Activated T-helper 2 cell treated with anti-CD3 and anti-CD28 coated beads, Interferon-gamma antibody, Interleukin-2, Interleukin-4, amounts not matched to agents 10 μg/mL and 5 μg/mL and 100 μg/mL, durations not matched to agents 14 hours and 24 hours and 36 hours (primary cell): ENCODE measurements at regions of chr9 and their contacts with region 1.

Region 1: GRCh38 chr9:27573634-27574590 is 631 bp upstream of the C9orf72 start:
- DNase-seq: peak; percentile 95
- H3K4me3 Mint-ChIP-seq: peak overlapping the region; percentile 97
- H3K27ac Mint-ChIP-seq: peak overlapping the region; percentile 100
- H3K4me1 Mint-ChIP-seq: peaks cover 32% of the 10 kb centered on the region
- H3K27me3 Mint-ChIP-seq: peaks cover 6% of the 10 kb centered on the region

Region 2: GRCh38 chr9:26946753-26947727 is 626.9 kb before region 1 on chr9 and contains the start of gene PLAA:
- intact Hi-C with region 1: loop called (anchors 1 kb)
- DNase-seq: peak; percentile 83
- H3K4me3 Mint-ChIP-seq: peak within 1 kb of the TSS; percentile 95
- H3K27ac Mint-ChIP-seq: peak within 1 kb of the TSS; percentile 100
- H3K4me1 Mint-ChIP-seq: peaks cover 47% of the 10 kb centered on the region
- H3K27me3 Mint-ChIP-seq: no peaks in the 10 kb centered on the region
- total RNA-seq, gene PLAA: 36.4 and 42.0 TPM in 2 replicates

Region 3: GRCh38 chr9:27379311-27380251 is 194.3 kb before region 1 on chr9:
- intact Hi-C with region 1: loop called (anchors 1 kb)
- DNase-seq: peak; percentile 37
- H3K4me3 Mint-ChIP-seq: no peak overlapping the region
- H3K27ac Mint-ChIP-seq: no peak overlapping the region
- H3K4me1 Mint-ChIP-seq: peaks cover 18% of the 10 kb centered on the region
- H3K27me3 Mint-ChIP-seq: peaks cover 10% of the 10 kb centered on the region

Region 4: GRCh38 chr9:27473111-27473529 is 100.8 kb before region 1 on chr9:
- intact Hi-C with region 1: no loop called
- DNase-seq: no peak
- H3K4me3 Mint-ChIP-seq: no peak overlapping the region
- H3K27ac Mint-ChIP-seq: no peak overlapping the region
- H3K4me1 Mint-ChIP-seq: peaks cover 12% of the 10 kb centered on the region
- H3K27me3 Mint-ChIP-seq: no peaks in the 10 kb centered on the region

Region 5: DNA sequence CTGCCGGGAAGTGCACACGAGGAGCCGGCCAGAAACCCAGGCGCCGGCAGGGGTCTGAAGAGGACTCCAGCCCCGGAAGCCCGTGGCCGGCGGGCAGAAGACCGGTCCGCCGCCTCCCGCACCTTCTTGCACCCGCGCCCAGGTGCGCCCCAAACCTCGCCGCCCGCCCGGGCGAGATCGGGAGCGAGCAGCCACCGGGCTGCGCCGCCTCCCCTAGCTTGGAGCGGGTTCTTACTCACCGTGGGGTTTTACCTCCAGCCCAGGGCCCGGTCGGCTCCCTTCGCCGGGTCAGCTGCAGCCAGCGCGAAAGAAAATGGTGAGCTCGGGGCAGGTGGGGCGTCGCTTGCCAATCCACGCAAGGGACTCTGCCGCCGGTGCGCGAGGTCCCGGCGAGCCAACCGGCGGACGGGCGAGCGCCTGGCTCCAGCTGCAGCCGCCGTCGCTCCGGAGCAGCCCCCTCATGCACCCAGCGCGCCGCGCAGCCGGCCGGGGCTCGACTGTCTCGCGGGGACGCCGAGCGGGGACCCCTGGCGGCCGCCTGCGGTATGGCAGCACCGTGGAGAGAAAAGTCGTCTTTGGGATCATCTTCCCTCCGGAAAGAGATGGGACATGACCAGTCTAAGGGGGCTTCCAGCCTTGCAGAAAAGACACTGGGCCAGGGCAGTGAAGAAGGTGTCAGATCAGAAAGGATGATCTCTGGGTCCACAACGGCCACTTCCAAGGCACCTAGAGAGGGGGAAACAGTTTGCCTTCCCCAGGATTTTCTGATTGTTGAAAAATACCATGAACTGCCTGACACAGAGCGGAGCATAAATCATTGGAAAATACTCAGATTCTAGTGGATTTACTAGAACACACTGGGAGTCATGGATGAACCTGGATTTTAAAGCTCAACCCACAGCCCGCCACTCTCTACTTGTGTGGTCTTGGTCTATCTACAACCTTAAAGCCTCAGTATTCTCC is 44.3 kb before region 1 on chr9 and contains the start of gene MOB3B:
- intact Hi-C with region 1: loop called (anchors 1 kb)
- DNase-seq: peak; percentile 62
- H3K4me3 Mint-ChIP-seq: peak within 1 kb of the TSS; percentile 85
- H3K27ac Mint-ChIP-seq: peak within 1 kb of the TSS; percentile 62
- H3K4me1 Mint-ChIP-seq: peaks cover 6% of the 10 kb centered on the region
- H3K27me3 Mint-ChIP-seq: peaks cover 33% of the 10 kb centered on the region
- total RNA-seq, gene MOB3B: 0.94 and 1.3 TPM in 2 replicates

Region 6: DNA sequence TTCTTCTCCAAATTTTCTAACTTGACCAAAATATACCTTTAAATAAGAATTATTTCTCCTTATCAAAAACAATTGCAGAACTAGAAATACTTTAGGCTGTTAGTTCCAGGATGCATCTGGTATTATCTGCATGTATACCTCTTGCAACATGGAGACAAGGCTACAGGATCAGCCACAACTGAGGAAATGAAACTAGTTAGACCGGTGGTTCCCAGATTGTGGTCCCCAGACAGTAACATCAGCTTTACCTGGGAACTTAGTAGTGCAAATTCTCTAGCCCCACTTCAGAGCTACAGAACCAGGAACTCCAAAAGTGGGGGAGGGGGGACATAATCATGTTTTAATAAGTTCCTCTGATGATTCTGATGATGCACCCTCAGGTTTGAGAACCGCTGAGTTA is 61.0 kb after region 1 on chr9:
- intact Hi-C with region 1: no loop called
- DNase-seq: no peak
- H3K4me3 Mint-ChIP-seq: no peak overlapping the region
- H3K27ac Mint-ChIP-seq: no peak overlapping the region
- H3K4me1 Mint-ChIP-seq: no peaks in the 10 kb centered on the region
- H3K27me3 Mint-ChIP-seq: peaks cover 5% of the 10 kb centered on the region

Region 7: DNA sequence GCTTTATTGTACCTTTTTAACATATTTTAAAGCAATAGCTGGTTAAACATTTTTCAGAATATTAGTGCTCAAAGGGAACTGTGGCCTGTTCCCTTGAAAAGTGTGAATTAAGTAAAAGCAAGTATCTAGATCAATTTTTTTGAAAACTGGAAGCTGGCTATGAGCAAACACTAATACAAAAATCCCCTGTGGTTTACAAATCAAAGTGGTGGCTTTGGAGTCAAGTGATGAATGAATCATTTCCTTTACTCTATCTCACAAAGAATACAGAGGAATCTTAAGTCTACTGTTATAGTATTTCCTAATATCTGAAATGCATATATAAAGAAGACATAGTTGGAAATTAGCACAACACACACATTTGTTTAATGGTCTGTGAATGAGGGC is 211.8 kb after region 1 on chr9:
- intact Hi-C with region 1: loop called (anchors 2 kb)
- DNase-seq: no peak
- H3K4me3 Mint-ChIP-seq: no peak overlapping the region
- H3K27ac Mint-ChIP-seq: peak overlapping the region; percentile 56
- H3K4me1 Mint-ChIP-seq: peaks cover 16% of the 10 kb centered on the region
- H3K27me3 Mint-ChIP-seq: peaks cover 16% of the 10 kb centered on the region